PC-9 (cell line): ENCODE measurements at regions of chr2 and their contacts with region 1.

Region 1: DNA sequence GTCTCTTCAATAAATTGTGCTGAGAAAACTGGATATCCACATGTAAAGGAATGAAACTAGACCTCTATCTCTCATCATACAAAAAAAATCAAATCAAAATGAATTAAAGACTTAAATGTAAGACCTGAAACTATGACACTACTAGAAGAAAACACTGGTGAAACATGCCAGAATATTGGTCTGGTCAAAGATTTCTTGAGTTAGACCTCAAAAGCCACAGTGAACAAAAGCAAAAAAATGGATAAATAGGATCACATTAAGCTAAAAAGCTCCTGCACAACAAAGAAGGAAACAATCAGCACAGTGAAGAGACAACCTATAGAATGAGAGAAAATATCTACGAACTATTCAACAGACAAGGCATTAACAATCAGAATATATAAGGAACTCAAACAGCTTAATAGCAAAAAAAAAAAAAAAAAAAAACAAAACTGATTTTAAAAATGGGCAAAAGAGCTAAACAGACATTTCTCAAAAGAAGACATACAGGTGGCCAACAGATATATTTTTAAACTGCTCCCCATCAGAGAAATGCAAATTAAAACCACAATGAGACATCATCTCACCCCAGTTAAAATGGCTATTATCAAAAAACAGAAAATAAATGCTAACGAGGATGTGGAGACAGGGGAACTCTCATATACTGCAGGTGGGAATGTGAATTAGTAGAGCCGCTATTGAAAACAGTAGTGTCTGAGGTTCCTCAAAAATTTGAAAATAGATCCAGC is 66.3 kb downstream of the NCKAP1 start:
- DNase-seq: no peak
- H3K4me3 ChIP-seq: no peak overlapping the region
- H3K27ac ChIP-seq: no peak overlapping the region
- H3K4me1 ChIP-seq: no peaks in the 10 kb centered on the region
- H3K27me3 ChIP-seq: no peaks in the 10 kb centered on the region
- CTCF ChIP-seq: no peak

Region 2: DNA sequence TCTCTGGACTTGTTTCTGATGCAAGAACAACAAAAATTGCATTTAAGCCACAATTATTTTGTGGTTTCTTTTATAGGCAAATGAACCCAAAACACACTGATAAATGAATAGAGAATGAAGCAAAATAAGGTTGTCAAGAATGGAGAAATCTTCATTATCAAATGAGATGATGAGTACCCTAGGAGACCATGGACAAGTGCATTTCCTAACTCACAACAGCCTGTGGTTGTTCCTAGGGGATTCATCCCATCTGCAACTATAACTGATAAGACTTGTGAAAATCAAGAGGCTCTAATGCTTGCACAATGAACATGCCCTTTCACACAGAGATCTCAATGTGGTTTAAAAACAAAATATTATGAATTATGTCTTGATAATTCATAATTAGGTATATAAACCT is 705.1 kb before region 1 on chr2:
- CTCF ChIA-PET with region 1: no interaction called
- POLR2A ChIA-PET with region 1: no interaction called
- intact Hi-C with region 1: no loop called
- DNase-seq: no peak
- H3K4me3 ChIP-seq: no peak overlapping the region
- H3K27ac ChIP-seq: no peak overlapping the region
- H3K4me1 ChIP-seq: no peaks in the 10 kb centered on the region
- H3K27me3 ChIP-seq: no peaks in the 10 kb centered on the region
- CTCF ChIP-seq: no peak

Region 3: DNA sequence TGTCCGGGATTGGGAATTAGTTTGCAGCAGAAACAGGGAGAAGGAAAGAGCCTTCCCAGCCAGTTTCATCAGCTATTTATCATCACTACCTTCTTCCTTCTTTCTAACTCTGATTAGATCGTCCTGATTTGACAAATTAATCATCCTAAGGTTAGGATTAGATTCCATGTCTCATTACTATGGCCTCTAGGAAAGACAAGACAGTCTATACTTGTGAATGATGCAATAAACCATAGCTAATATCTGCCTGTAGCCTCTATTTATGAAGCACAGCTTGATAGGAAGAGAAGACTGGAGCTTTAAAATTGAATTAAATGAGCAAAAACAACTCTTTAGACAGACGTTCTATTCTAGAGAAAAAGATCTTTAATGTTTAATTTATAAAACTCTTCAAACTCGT is 80.4 kb before region 1 on chr2:
- CTCF ChIA-PET with region 1: no interaction called
- POLR2A ChIA-PET with region 1: interaction called, 12 read pairs
- intact Hi-C with region 1: no loop called
- DNase-seq: no peak
- H3K4me3 ChIP-seq: no peak overlapping the region
- H3K27ac ChIP-seq: no peak overlapping the region
- H3K4me1 ChIP-seq: no peaks in the 10 kb centered on the region
- H3K27me3 ChIP-seq: no peaks in the 10 kb centered on the region
- CTCF ChIP-seq: no peak

Region 4: DNA sequence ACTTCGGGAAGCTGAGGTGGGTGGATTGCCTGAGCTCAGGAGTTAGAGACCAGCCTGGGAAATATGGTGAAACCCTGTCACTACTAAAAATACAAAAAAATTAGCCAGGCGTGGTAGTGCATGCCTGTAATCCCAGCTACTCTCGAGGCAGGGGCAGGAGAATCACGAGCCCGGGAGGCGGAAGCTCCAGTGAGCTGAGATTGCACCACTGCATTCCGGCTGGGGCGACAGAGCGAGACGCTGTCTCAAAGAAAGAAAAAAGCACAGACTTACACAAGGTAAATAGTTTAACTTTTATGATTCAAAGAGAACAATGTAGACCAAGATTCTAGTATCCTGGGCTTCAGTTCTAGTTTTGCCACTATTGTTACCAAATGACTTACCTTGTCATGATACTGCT is 28.9 kb after region 1 on chr2:
- CTCF ChIA-PET with region 1: interaction called, 17 read pairs
- POLR2A ChIA-PET with region 1: no interaction called
- intact Hi-C with region 1: no loop called
- DNase-seq: no peak
- H3K4me3 ChIP-seq: no peak overlapping the region
- H3K27ac ChIP-seq: no peak overlapping the region
- H3K4me1 ChIP-seq: no peaks in the 10 kb centered on the region
- H3K27me3 ChIP-seq: no peaks in the 10 kb centered on the region
- CTCF ChIP-seq: no peak

Region 5: DNA sequence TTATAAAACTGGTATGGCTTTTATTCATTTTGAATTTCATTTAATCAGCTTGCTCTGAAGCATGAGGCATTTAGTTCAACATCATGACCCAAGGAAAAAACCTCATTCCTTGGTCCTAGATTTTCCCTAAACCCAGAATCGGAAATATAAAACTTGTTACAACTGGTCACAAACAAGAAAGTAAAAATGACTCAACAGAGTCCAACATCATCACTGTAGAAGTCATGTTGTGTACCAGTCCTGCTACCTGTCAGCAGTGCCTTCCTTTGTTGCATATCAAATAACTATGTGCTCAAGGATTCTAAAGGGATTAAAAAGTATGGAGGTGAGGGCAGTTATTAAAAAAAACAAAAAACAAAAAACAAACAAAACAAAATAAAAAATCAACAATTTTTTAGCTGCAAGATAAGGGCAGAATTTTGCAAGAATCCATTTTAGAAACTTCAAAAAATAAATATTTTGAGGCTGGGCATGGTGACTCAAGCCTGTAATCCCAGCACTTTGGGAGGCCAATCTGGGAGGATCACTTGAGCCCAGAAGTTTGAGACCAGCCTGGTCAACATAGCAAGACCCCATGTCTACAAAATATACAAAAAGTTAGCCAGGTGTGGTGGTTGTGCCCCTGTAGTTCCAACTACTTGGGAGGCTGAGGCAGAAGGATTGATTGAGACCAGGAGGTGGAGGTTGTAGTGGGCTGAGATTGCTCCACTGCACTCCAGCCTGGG is 47.9 kb after region 1 on chr2:
- CTCF ChIA-PET with region 1: interaction called, 14 read pairs
- POLR2A ChIA-PET with region 1: no interaction called
- intact Hi-C with region 1: no loop called
- DNase-seq: no peak
- H3K4me3 ChIP-seq: no peak overlapping the region
- H3K27ac ChIP-seq: no peak overlapping the region; the same call in 1 of the 2 replicates
- H3K4me1 ChIP-seq: no peaks in the 10 kb centered on the region
- H3K27me3 ChIP-seq: no peaks in the 10 kb centered on the region
- CTCF ChIP-seq: no peak

Region 6: DNA sequence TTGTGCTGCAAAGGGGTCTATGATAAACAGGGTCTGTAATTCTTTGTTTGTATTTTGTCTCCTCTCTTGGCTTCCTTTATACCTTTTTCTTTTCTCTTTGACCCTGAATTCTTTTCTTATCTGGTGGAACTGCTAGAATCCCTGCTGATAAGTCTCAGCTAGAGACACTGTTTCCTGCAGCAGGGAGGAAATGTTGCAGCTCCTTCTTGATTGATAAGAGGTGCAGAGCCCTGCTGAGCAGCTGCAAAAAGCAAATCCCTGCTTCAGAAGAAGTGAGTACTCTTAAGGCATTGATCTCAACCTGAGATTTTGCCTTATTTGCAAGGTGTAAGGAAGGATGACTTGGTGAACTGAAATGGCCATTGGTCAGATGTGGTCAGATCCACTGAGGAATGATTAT is 320.0 kb after region 1 on chr2:
- CTCF ChIA-PET with region 1: no interaction called
- POLR2A ChIA-PET with region 1: no interaction called
- intact Hi-C with region 1: no loop called
- DNase-seq: no peak
- H3K4me3 ChIP-seq: no peak overlapping the region
- H3K27ac ChIP-seq: no peak overlapping the region
- H3K4me1 ChIP-seq: no peaks in the 10 kb centered on the region
- H3K27me3 ChIP-seq: no peaks in the 10 kb centered on the region
- CTCF ChIP-seq: no peak